PC-9 (cell line): ENCODE measurements at regions of chr3 and their contacts with region 1.

Region 1: GRCh38 chr3:177597311-177598096 is 400.2 kb upstream of the TBL1XR1 start:
- DNase-seq: peak in 1 of 2 experiments; percentile 26
- H3K4me3 ChIP-seq: no peak overlapping the region
- H3K27ac ChIP-seq: peak overlapping the region; percentile 69
- H3K4me1 ChIP-seq: peaks cover 78% of the 10 kb centered on the region
- H3K27me3 ChIP-seq: no peaks in the 10 kb centered on the region
- CTCF ChIP-seq: no peak

Region 2: DNA sequence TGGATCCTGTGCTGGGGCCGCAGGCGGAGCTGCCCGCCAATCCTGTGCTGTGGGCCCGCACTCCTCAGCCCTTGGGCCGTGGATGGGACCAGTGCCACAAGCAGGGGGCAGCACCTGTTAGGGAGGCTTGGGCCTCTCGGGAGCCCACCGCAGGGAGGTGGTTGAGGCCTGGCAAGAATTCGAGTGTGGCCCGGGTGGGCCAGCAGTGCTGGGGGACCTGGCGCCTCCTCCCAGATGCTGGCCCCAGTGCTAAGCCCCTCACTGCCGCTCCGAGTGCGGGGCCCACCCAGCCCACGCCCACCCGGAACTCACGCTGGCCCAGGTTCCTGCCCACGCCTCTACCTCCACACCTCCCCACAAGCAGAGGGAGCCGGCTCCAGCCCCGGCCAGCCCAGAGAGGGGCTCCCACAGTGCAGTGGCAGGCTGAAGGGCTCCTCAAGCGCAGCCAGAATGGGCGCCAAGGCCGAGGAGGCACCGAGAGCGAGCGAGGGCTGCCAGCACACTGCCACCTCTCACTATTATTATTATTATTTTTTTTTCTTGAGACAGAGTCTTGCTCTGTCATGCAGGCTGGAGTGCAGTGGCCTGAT is 368.8 kb before region 1 on chr3:
- CTCF ChIA-PET with region 1: no interaction called
- POLR2A ChIA-PET with region 1: interaction called, 11 read pairs
- intact Hi-C with region 1: no loop called
- DNase-seq: no peak
- H3K4me3 ChIP-seq: no peak overlapping the region
- H3K27ac ChIP-seq: no peak overlapping the region
- H3K4me1 ChIP-seq: no peaks in the 10 kb centered on the region
- H3K27me3 ChIP-seq: no peaks in the 10 kb centered on the region
- CTCF ChIP-seq: no peak

Region 3: GRCh38 chr3:177337541-177338331 is 259.8 kb before region 1 on chr3:
- CTCF ChIA-PET with region 1: no interaction called
- POLR2A ChIA-PET with region 1: no interaction called
- intact Hi-C with region 1: no loop called
- DNase-seq: no peak
- H3K4me3 ChIP-seq: no peak overlapping the region
- H3K27ac ChIP-seq: no peak overlapping the region
- H3K4me1 ChIP-seq: peaks cover 56% of the 10 kb centered on the region
- H3K27me3 ChIP-seq: no peaks in the 10 kb centered on the region
- CTCF ChIP-seq: no peak

Region 4: GRCh38 chr3:177473184-177473583 is 124.3 kb before region 1 on chr3:
- CTCF ChIA-PET with region 1: no interaction called
- POLR2A ChIA-PET with region 1: interaction called, 11 read pairs
- intact Hi-C with region 1: no loop called
- DNase-seq: no peak
- H3K4me3 ChIP-seq: no peak overlapping the region
- H3K27ac ChIP-seq: no peak overlapping the region
- H3K4me1 ChIP-seq: peaks cover 23% of the 10 kb centered on the region
- H3K27me3 ChIP-seq: no peaks in the 10 kb centered on the region
- CTCF ChIP-seq: no peak

Region 5: GRCh38 chr3:177525987-177526712 is 71.4 kb before region 1 on chr3:
- CTCF ChIA-PET with region 1: no interaction called
- POLR2A ChIA-PET with region 1: no interaction called
- intact Hi-C with region 1: loop called (anchors 2 kb)
- DNase-seq: peak; percentile 25 to 87
- H3K4me3 ChIP-seq: no peak overlapping the region
- H3K27ac ChIP-seq: no peak overlapping the region
- H3K4me1 ChIP-seq: peaks cover 79% of the 10 kb centered on the region
- H3K27me3 ChIP-seq: no peaks in the 10 kb centered on the region
- CTCF ChIP-seq: no peak